ENCODE measurements at regions of chr2 and their contacts with region 1.

Region 1: GRCh38 chr2:237627441-237628246 is at the start of gene LRRFIP1:
- DNase-seq: peak; percentile 54 to 82 (median 79)
- ATAC-seq: peak; percentile 74 to 78
- H3K4me3 ChIP-seq: peak within 1 kb of the TSS; percentile 93
- H3K27ac ChIP-seq: peak within 1 kb of the TSS; percentile 77
- H3K4me1 ChIP-seq: peaks cover 22% of the 10 kb centered on the region
- H3K27me3 ChIP-seq: no peaks in the 10 kb centered on the region
- total RNA-seq, gene LRRFIP1: 85.6 to 106 (median 87.8) TPM

Region 2: GRCh38 chr2:237662671-237663093 is 35.0 kb after region 1 on chr2:
- intact Hi-C with region 1: loop called in 1 of 4 experiments (anchors 5 kb)
- DNase-seq: peak; percentile 91 to 94 (median 92)
- ATAC-seq: peak; percentile 90 to 93
- H3K4me3 ChIP-seq: no peak overlapping the region
- H3K27ac ChIP-seq: no peak overlapping the region
- H3K4me1 ChIP-seq: peaks cover 2% of the 10 kb centered on the region
- H3K27me3 ChIP-seq: no peaks in the 10 kb centered on the region